Dendritic cell treated with granulocyte-macrophage colony-stimulating factor and Interleukin-4, amounts not matched to agents 40 ng/mL and 50 ng/mL, for 4 days (primary cell): ENCODE measurements at regions of chr15 and their contacts with region 1.

Region 1: GRCh38 chr15:46622851-46623250 is 988.0 kb downstream of the SQOR start:
- H3K4me3 Mint-ChIP-seq: no peak overlapping the region
- H3K27ac Mint-ChIP-seq: no peak overlapping the region
- H3K4me1 Mint-ChIP-seq: no peaks in the 10 kb centered on the region
- H3K27me3 Mint-ChIP-seq: no peaks in the 10 kb centered on the region

Region 2: GRCh38 chr15:46354443-46354842 is 268.4 kb before region 1 on chr15:
- intact Hi-C with region 1: loop called (anchors 10 kb)
- H3K4me3 Mint-ChIP-seq: no peak overlapping the region
- H3K27ac Mint-ChIP-seq: no peak overlapping the region
- H3K4me1 Mint-ChIP-seq: no peaks in the 10 kb centered on the region
- H3K27me3 Mint-ChIP-seq: no peaks in the 10 kb centered on the region